Dorsolateral prefrontal cortex (tissue), 120 donors: ENCODE measurements at regions of chr11 and their contacts with region 1.

Region 1: GRCh38 chr11:114400217-114400914 is at the starts of genes C11orf71 and RBM7:
- DNase-seq: peak; percentile 92 to 96 (median 94)
- H3K4me3 ChIP-seq: peak within 1 kb of the TSS; percentile 63 to 99 (median 89)
- H3K27ac ChIP-seq: peak within 1 kb of the TSS; percentile 78 to 99 (median 96)
- H3K27me3 ChIP-seq: no peaks in the 10 kb centered on the region
- CTCF ChIP-seq: peak in 32 of 56 donors; percentile 3 to 52 (median 22)
- total RNA-seq, gene C11orf71: 6.3 to 33.8 (median 12.8) TPM
- total RNA-seq, gene RBM7: 8.3 to 29.9 (median 17.0) TPM

Region 2: GRCh38 chr11:114348200-114349191 is 51.9 kb before region 1 on chr11:
- intact Hi-C with region 1: loop called in 1 of 2 experiments (anchors 5 kb)
- DNase-seq: peak in 2 of 10 donors; percentile 28 to 29
- H3K4me3 ChIP-seq: peak overlapping the region in 10 of 59 donors; percentile 9 to 36 (median 24)
- H3K27ac ChIP-seq: no peak overlapping the region
- H3K27me3 ChIP-seq: no peaks in the 10 kb centered on the region
- CTCF ChIP-seq: peak; percentile 20 to 77 (median 61)